K562 (cell line): ENCODE measurements at regions of chr7 and their contacts with region 1.

Region 1: GRCh38 chr7:103074519-103075336 is at the starts of genes ARMC10 and FBXL13:
- DNase-seq: peak; percentile 96 to 98 (median 96)
- ATAC-seq: peak; percentile 95
- H3K4me3 ChIP-seq: peak within 1 kb of the TSS; percentile 83
- H3K27ac ChIP-seq: peak within 1 kb of the TSS; percentile 82
- H3K4me1 ChIP-seq: peaks cover 6 to 8% of the 10 kb centered on the region in 2 experiments; a peak in 4 of 5 replicates
- H3K27me3 ChIP-seq: no peaks in the 10 kb centered on the region
- CTCF ChIP-seq: peak; percentile 54 to 87 (median 55); a peak in 5 of 6 replicates
- EP300 ChIP-seq: no peak; the same call in 1 of the 2 replicates
- POLR2A ChIP-seq: peak; percentile 78
- RAD21 ChIP-seq: no peak
- polyA plus RNA-seq, gene ARMC10: 17.0 to 22.7 TPM
- polyA plus RNA-seq, gene FBXL13: 25.4 to 26.6 TPM

Region 2: DNA sequence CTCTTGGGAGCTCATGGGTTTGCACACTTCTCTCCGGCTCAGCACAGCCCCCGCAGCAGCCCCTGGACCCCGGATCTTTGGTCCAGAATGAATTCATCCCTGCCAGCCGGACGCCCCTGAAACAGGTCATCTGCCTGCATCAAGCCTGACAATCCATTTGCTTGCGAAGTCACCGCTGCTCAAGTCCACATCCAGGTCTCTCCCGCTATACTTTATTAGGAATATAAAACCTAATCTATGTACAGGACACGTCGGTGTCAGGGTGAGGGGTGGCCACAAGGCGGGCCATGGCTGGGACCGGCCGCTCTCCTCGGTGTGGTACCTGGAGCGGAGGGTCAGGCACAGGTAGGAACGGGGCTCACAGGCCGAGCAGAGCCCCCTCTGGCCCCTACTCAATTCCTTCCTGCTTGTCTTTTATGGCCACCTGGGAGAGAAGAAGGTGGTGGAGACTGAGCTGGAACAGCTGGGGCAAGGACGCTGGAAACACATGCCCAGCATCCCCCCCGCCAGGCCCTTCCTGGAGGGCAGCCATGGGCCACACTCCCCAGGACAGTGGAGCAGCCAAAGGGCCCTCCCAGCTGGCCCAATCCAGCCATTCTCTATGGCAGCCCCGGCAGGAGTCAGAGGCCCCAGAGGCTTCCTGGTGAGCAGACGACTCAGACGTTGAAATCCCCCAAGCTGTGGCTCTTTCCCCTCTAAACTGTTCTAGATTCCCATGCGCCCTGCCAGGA is 601.3 kb before region 1 on chr7:
- CTCF ChIA-PET with region 1: no interaction called
- POLR2A ChIA-PET with region 1: no interaction called
- in situ Hi-C with region 1: loop called (anchors 25 kb)
- intact Hi-C with region 1: no loop called
- DNase-seq: no peak
- ATAC-seq: no peak
- H3K4me3 ChIP-seq: no peak overlapping the region
- H3K27ac ChIP-seq: no peak overlapping the region
- H3K4me1 ChIP-seq: peaks cover 0 to 36% of the 10 kb centered on the region in 2 experiments; a peak in 3 of 5 replicates
- H3K27me3 ChIP-seq: no peaks in the 10 kb centered on the region
- CTCF ChIP-seq: no peak
- EP300 ChIP-seq: no peak
- POLR2A ChIP-seq: peak; percentile 43
- RAD21 ChIP-seq: no peak

Region 3: DNA sequence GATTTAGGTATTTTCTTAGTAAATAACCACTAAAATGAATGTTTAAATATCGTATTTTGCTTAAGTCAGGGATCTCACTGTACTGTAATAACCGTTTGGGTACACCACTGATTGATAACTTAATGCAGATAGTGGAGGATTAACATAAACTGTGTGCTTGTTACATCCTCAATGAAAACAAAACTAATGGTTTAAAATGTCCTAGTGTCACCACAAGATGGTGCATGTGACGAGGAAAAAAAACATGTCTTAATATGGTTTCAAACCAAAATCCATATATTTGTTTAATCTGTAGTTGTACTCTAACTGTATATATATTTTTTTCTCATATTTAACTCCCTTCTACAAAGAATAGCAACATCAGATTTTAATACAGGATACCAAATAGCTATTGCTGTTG is 19.4 kb after region 1 on chr7:
- CTCF ChIA-PET with region 1: no interaction called
- POLR2A ChIA-PET with region 1: interaction called, 11 read pairs
- in situ Hi-C with region 1: no loop called
- intact Hi-C with region 1: no loop called
- DNase-seq: no peak
- ATAC-seq: peak; percentile 58
- H3K4me3 ChIP-seq: no peak overlapping the region
- H3K27ac ChIP-seq: no peak overlapping the region
- H3K4me1 ChIP-seq: no peaks in the 10 kb centered on the region
- H3K27me3 ChIP-seq: no peaks in the 10 kb centered on the region
- CTCF ChIP-seq: peak in 1 of 3 experiments; percentile 52; a peak in 2 of 6 replicates
- EP300 ChIP-seq: no peak
- POLR2A ChIP-seq: no peak
- RAD21 ChIP-seq: peak in 1 of 2 experiments; percentile 69; a peak in 2 of 4 replicates

Region 4: DNA sequence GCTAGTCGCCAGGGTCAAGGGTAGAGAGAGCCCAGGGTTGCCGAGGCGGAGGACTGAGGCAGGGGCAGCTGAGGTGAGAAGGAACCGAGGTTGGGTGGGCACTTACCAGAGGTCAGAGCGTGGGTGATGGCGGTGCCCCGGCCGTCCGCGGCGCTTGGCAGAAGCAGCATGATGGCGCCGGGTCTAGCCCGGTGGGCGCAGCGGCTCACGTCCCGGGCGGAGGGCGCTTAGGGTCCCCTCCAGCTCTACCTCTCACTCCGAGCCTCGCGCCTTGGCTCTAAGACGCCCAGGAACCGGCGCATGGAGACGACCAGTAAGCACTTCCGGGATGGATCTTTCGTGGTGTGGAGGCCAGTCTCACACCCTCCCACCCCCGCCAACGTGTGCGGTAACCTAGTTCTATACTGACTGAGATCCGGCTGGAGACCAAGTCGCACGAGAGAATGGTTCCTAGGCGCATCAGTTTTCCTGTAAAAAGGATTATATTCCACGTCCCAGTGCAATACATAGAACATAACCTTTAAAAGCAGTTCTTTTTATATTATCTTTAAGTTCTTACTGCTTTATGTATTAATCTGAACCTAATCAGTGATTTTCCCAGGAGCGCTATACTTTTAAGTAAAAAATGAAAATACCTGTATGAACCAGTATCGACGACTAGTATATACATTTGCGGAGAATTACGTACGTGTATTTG is 269.9 kb after region 1 on chr7 and contains the start of gene DNAJC2:
- CTCF ChIA-PET with region 1: no interaction called
- POLR2A ChIA-PET with region 1: no interaction called
- in situ Hi-C with region 1: no loop called
- intact Hi-C with region 1: no loop called
- DNase-seq: peak; percentile 88 to 98 (median 92)
- ATAC-seq: peak; percentile 89
- H3K4me3 ChIP-seq: peak within 1 kb of the TSS; percentile 82
- H3K27ac ChIP-seq: peak within 1 kb of the TSS; percentile 93
- H3K4me1 ChIP-seq: peaks cover 7 to 11% of the 10 kb centered on the region in 2 experiments; a peak in 3 of 5 replicates
- H3K27me3 ChIP-seq: no peaks in the 10 kb centered on the region
- CTCF ChIP-seq: no peak
- EP300 ChIP-seq: peak; percentile 73
- POLR2A ChIP-seq: peak; percentile 95
- RAD21 ChIP-seq: no peak
- polyA plus RNA-seq, gene DNAJC2: 40.2 to 40.4 TPM